HepG2 (cell line): ENCODE measurements at regions of chr6 and their contacts with region 1.

Region 1: GRCh38 chr6:125191916-125192609 is 38.5 kb downstream of the TPD52L1 start:
- DNase-seq: peak; percentile 51
- ATAC-seq: peak; percentile 99
- H3K4me3 ChIP-seq: no peak overlapping the region
- H3K27ac ChIP-seq: no peak overlapping the region
- H3K4me1 ChIP-seq: no peaks in the 10 kb centered on the region
- H3K27me3 ChIP-seq: no peaks in the 10 kb centered on the region
- CTCF ChIP-seq: peak; percentile 72
- EP300 ChIP-seq: no peak
- POLR2A ChIP-seq: no peak
- RAD21 ChIP-seq: no peak

Region 2: GRCh38 chr6:125301435-125302391 is 109.7 kb after region 1 on chr6 and contains the start of gene HDDC2:
- CTCF ChIA-PET with region 1: no interaction called
- POLR2A ChIA-PET with region 1: no interaction called
- in situ Hi-C with region 1: no loop called
- intact Hi-C with region 1: loop called (anchors 5 kb)
- DNase-seq: peak; percentile 68
- ATAC-seq: peak; percentile 99
- H3K4me3 ChIP-seq: peak within 1 kb of the TSS; percentile 54 to 85 (median 84)
- H3K27ac ChIP-seq: peak within 1 kb of the TSS; percentile 67
- H3K4me1 ChIP-seq: peaks cover 32% of the 10 kb centered on the region
- H3K27me3 ChIP-seq: peaks cover 0 to 4% of the 10 kb centered on the region in 2 experiments; a peak in 1 of 5 replicates
- CTCF ChIP-seq: peak; percentile 7; the same call in 1 of the 2 replicates
- EP300 ChIP-seq: peak in 1 of 2 experiments; percentile 38; a peak in 2 of 4 replicates
- POLR2A ChIP-seq: peak; percentile 82 to 83
- RAD21 ChIP-seq: peak; percentile 71
- total RNA-seq, gene HDDC2: 78.7 and 90.7 TPM in 2 replicates

Region 3: GRCh38 chr6:125764121-125764671 is 572.1 kb after region 1 on chr6:
- CTCF ChIA-PET with region 1: no interaction called
- POLR2A ChIA-PET with region 1: no interaction called
- in situ Hi-C with region 1: no loop called
- intact Hi-C with region 1: loop called (anchors 10 kb)
- DNase-seq: no peak
- ATAC-seq: no peak
- H3K4me3 ChIP-seq: no peak overlapping the region
- H3K27ac ChIP-seq: no peak overlapping the region
- H3K4me1 ChIP-seq: no peaks in the 10 kb centered on the region
- H3K27me3 ChIP-seq: peaks cover 0 to 1% of the 10 kb centered on the region in 2 experiments; a peak in 1 of 5 replicates
- CTCF ChIP-seq: no peak
- EP300 ChIP-seq: no peak
- POLR2A ChIP-seq: no peak
- RAD21 ChIP-seq: no peak